Posterior vena cava (tissue), 2 donors: ENCODE measurements at regions of chr3 and their contacts with region 1.

Region 1: DNA sequence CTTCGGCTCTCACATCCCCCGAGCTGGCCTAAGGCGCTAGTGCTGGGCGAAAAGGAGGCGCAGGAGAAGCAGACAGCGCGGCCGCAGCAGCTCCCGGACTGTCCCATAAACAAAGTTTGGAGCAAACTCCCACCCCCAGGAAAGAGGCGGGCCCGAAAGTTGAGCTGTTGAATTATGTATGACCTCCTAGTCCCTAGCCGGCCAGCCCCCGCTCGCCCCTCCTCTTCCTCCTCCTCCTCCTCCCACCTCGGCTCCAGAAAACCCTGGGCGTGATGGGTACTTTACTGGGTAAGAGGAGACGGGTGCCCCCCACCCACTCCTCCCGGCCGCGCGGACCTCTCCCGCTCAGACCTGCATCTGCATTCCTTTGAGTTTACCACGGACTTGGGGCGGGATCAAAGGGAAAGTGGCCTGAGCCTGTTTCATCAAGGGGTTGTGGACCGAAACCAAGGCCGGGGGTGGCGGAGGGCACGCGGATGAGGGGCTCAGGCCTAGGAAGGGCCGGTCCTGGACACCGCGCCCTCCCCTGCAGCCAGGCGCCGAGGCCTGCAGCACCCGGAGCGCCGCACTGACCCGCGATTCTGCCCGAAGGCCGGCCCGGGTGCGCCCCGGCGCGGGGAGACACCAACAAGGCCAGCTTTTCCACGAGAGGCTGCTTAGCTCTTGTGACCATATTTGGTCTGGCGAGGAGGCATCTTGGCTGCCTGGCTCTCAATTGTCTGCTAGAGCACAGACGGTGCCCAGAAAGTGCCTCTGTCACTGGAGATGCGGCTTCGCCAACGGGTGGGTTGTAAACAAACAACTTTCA is at the start of gene WWTR1:
- DNase-seq: peak; percentile 97
- total RNA-seq, gene WWTR1: 177 to 201 TPM

Region 2: DNA sequence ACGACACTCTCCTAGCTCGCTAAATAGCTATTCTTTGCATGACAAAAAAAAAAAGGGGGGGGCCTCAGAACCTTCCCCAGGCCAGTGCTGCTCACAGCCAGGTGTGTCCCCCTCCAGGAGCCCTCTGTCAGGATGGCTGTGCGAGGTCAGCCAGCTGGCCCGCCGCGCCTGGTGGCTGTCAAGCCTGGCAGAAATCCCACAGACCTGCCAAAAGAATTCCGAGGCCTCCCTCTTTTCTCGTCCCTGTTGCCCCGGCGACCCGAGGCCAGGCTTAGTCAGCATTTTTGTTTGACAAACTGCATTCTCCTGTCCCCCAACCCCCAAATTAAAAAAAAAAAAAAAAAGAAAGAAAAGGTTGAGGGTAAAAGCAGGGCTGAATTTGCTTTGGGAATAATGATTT is 121.7 kb before region 1 on chr3:
- intact Hi-C with region 1: loop called (anchors 5 to 10 kb)
- DNase-seq: peak; percentile 84

Region 3: GRCh38 chr3:149990423-149990948 is 332.4 kb after region 1 on chr3:
- intact Hi-C with region 1: no loop called
- DNase-seq: no peak